Gastrocnemius medialis (tissue), 4 donors: ENCODE measurements at regions of chr5 and their contacts with region 1.

Region 1: DNA sequence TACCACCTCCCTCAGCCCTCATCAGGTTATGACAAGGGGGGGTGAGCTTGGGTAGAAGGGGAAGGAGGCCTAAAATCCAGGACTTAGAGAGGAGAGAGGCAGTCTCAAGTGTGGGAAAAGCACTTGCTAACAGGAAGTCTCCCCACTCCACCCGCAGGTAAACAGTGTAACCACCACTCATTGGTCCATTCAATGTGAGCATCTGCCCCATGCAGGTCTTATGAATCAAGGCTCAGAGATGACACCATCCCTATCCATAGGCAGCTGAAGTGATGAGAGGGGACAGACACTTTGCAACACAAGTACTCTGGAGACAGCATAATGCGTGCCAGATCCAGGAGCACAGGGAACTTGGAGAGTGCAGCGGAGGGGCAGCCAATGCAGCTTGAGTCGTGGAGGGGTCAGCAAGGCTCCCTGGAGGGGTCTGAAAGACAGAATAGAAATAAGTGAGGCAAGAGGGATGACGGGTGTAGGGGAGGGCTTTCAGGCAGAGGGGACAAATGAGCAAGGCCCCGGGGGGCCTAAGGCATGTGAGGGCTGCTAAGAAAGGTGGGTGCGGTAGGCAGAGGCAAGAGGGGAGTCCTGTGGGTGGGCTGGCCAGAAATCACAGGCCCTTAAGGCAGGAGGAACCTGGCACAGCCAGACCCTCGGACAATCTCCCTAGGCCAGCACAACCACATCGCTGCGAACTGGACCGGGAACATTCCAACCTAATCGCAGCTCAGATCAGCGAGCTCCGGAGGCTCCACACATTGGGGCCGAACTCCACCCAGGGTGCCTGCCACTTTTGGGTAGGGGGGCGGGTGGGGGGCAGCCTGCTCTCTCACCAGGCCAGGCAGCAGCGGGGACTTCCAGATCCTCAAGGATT is 23.0 kb upstream of the CYSTM1 start:
- DNase-seq: no peak
- ATAC-seq: no peak
- H3K4me3 ChIP-seq: no peak overlapping the region
- H3K27ac ChIP-seq: no peak overlapping the region
- H3K4me1 ChIP-seq: peaks cover 6 to 7% of the 10 kb centered on the region in 2 donors
- H3K27me3 ChIP-seq: no peaks in the 10 kb centered on the region
- CTCF ChIP-seq: no peak
- POLR2A ChIP-seq: no peak

Region 2: DNA sequence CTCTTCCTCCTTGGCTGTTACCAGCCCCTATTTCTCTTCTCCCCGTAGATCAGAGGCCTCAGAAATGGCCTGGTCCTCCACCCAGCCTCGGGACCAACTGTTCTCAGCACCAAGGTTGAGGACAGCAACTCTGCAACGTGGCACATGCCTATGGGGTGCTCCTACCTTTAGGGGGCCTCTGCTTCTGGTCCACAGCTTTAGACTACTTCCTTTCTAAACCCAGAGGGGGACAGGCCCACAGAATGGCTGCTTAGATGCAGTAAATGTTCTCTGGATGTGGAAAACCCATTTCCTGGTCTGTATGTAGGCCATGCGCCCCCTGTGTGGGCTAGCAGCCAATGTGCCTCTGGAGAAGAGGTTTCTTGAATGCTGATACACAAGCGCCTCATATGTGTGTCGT is 177.3 kb before region 1 on chr5:
- in situ Hi-C with region 1: no loop called
- intact Hi-C with region 1: loop called (anchors 5 kb)
- DNase-seq: no peak
- ATAC-seq: no peak
- H3K4me3 ChIP-seq: no peak overlapping the region
- H3K27ac ChIP-seq: no peak overlapping the region
- H3K4me1 ChIP-seq: peaks cover 25 to 36% of the 10 kb centered on the region in 2 donors
- H3K27me3 ChIP-seq: no peaks in the 10 kb centered on the region
- CTCF ChIP-seq: no peak
- POLR2A ChIP-seq: no peak